Common myeloid progenitor, CD34-positive (primary cell): ENCODE measurements at regions of chr2 and their contacts with region 1.

Region 1: DNA sequence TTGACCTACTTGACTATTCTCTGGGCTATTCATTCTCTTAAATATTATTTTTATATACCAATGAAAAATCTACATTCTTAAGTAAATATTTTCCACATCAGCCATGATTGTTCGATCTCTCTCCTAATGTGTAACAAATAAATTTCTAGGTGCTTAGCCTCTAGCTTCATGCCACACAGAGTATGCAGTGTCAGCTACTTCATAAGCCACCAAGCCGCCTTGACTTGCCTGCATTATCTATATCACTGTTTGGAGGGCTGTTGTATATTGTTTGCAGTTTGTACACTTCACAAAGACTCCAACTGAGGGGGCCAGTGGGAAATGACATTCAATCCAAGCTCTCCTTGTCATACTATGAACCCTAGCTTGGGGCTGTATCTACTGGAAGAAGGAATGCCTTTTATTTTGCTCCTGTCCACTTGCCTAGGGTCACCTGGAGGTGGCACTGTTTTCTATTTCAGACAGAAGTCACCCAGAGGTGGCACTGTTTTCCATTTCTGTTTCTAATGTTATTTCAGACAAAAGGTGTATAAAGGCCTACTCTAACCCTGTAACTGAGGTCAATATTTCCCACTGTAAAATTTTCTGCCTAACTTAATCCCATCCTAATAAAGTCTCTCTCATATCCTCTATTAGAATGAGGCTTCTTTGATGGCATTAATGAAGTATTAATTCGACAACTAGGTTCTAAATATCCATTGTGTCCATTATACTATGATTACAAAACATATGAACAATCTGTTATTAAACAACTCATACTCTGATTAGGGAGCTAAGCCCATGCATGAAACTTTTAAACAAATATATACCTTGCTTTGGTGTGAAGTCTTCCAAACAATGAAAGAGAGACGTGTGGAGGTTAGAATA is 36.4 kb downstream of the COL5A2 start:
- DNase-seq: peak; percentile 52 to 72 (median 65)
- H3K4me3 ChIP-seq: no peak overlapping the region
- H3K27ac ChIP-seq: no peak overlapping the region
- H3K4me1 ChIP-seq: no peaks in the 10 kb centered on the region
- H3K27me3 ChIP-seq: no peaks in the 10 kb centered on the region

Region 2: GRCh38 chr2:189412330-189412953 is 269.3 kb after region 1 on chr2:
- CTCF ChIA-PET with region 1: interaction called, 13 read pairs
- POLR2A ChIA-PET with region 1: no interaction called
- DNase-seq: peak; percentile 32 to 67 (median 63)
- H3K4me3 ChIP-seq: no peak overlapping the region
- H3K27ac ChIP-seq: no peak overlapping the region
- H3K4me1 ChIP-seq: peaks cover 0 to 3% (median 0%) of the 10 kb centered on the region in 4 experiments
- H3K27me3 ChIP-seq: no peaks in the 10 kb centered on the region